Dorsolateral prefrontal cortex (tissue), 120 donors: ENCODE measurements at regions of chr1 and their contacts with region 1.

Region 1: DNA sequence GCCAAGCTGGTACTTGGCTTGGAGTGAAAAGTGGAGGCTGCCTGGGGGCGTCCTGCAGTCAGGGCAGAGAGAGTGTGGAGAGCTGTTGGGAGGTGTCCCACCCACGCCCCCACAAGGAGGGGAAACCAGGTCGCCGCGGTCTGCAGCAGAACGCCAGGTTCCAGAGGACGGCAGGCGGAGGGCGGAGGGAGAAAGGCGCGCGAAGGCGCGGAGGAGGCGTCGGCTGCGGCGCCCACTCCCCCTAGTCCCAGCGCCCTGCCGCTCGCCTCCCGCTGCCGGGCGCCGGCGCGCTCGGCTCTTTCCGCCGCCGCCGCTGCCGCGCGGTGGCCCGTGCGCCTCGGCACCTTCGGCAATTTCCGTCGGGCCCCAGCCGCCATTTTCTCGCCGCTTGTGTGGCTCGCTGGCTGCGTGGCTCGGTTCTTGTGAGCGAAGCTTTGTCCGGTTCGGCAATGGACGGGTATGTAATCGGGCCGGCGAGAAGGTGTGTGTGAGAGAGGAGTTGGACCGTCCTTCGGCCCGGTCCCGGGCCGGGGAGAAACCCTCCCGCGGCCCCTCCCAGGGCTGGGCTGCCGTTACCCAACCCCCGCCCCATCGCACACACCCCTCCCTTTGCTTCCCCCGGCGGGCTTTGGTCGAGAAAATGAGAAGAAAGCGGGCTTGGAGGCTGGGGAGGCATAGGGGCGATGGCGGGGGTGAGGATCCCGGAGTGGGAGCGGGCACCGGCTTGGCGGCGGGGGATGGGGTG is at the start of gene PTBP2:
- DNase-seq: peak; percentile 66 to 88 (median 74)
- H3K4me3 ChIP-seq: peak within 1 kb of the TSS; percentile 66 to 94 (median 84)
- H3K27ac ChIP-seq: peak within 1 kb of the TSS; percentile 93 to 100 (median 99)
- H3K27me3 ChIP-seq: no peaks in the 10 kb centered on the region
- CTCF ChIP-seq: peak in 17 of 56 donors; percentile 6 to 33 (median 21)
- total RNA-seq, gene PTBP2: 30.7 to 97.7 (median 70.7) TPM

Region 2: GRCh38 chr1:96487394-96487793 is 234.2 kb before region 1 on chr1:
- intact Hi-C with region 1: loop called in 1 of 2 experiments (anchors 10 kb)
- DNase-seq: no peak
- H3K4me3 ChIP-seq: peak overlapping the region in 39 of 59 donors; percentile 1 to 58 (median 31)
- H3K27ac ChIP-seq: peak overlapping the region in 57 of 59 donors; percentile 30 to 95 (median 81)
- H3K27me3 ChIP-seq: no peaks in the 10 kb centered on the region
- CTCF ChIP-seq: peak in 17 of 56 donors; percentile 13 to 44 (median 21)

Region 3: DNA sequence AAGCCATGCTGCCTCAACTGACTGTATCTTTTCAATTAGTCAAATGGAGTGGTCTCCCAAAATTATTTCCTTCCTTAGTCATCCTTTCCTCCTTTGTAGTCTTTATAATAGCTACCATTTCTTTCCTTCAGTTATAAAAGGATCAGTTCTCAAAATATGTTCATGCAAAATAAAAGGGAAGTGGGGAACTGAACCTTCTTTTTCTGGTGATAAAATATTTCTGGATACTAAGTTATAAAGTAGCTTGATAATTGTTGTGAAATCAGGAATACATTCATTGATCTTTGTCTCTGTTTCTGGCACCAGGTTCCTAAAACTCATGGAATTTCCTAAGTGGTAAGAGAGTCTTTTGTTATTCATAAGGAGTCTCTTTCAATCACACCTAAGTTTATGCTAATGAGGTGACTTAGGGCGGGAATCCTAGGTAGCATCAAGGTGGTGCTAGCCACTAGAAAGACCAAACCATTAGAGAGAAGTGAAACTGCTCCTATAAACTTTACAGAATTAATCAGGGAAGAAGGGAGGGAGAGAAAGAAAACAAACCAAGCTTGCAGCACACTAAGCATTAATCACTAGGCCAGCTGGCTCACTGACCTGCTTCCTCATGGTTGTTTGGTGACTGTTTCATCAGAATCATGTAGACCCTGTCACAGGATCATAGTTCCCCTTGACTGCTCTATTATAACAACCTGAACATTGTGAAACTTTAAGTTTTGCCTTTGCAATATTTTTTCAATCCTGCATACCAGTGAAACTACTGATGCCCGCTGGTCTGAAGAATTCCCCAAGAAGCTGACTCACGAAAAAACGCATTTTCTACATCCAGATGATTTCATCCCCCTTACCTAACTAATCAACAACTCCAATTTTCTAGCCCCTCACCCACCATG is 161.6 kb before region 1 on chr1:
- intact Hi-C with region 1: loop called in 1 of 2 experiments (anchors 10 kb)
- DNase-seq: no peak
- H3K4me3 ChIP-seq: peak overlapping the region in 20 of 59 donors; percentile 4 to 43 (median 24)
- H3K27ac ChIP-seq: peak overlapping the region in 7 of 59 donors; percentile 1 to 43 (median 12)
- H3K27me3 ChIP-seq: no peaks in the 10 kb centered on the region
- CTCF ChIP-seq: no peak

Region 4: GRCh38 chr1:96596226-96596922 is 125.2 kb before region 1 on chr1:
- intact Hi-C with region 1: loop called (anchors 5 kb)
- DNase-seq: no peak
- H3K4me3 ChIP-seq: no peak overlapping the region
- H3K27ac ChIP-seq: peak overlapping the region in 57 of 59 donors; percentile 31 to 99 (median 94)
- H3K27me3 ChIP-seq: no peaks in the 10 kb centered on the region
- CTCF ChIP-seq: peak in 30 of 56 donors; percentile 7 to 46 (median 29)

Region 5: DNA sequence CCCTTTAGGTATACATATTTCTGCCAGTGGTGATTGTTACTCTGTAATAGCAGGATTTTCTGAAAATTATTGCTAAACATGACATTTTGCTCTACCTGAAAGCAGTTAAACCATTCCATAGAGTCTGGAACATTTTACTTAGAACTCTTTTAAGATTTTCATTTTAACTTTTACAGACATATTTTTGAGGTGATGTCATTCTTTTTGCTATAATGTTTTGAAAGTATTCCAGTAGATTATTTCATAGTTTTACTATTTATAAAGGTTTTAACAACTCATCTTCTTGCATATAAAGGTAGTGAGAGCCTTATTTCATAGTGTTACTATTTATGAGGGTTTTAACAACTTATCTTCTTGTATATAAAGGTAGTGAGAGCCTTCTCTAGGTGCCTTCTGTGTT is 42.9 kb after region 1 on chr1:
- intact Hi-C with region 1: no loop called
- DNase-seq: no peak
- H3K4me3 ChIP-seq: no peak overlapping the region
- H3K27ac ChIP-seq: no peak overlapping the region
- H3K27me3 ChIP-seq: no peaks in the 10 kb centered on the region
- CTCF ChIP-seq: no peak

Region 6: GRCh38 chr1:96820107-96820506 is 98.5 kb after region 1 on chr1:
- intact Hi-C with region 1: loop called in 1 of 2 experiments (anchors 10 kb)
- DNase-seq: no peak
- H3K4me3 ChIP-seq: no peak overlapping the region
- H3K27ac ChIP-seq: peak overlapping the region in 1 of 59 donors; percentile 13
- H3K27me3 ChIP-seq: no peaks in the 10 kb centered on the region
- CTCF ChIP-seq: no peak